Lower leg skin (tissue), 4 donors: ENCODE measurements at regions of chr6 and their contacts with region 1.

Region 1: DNA sequence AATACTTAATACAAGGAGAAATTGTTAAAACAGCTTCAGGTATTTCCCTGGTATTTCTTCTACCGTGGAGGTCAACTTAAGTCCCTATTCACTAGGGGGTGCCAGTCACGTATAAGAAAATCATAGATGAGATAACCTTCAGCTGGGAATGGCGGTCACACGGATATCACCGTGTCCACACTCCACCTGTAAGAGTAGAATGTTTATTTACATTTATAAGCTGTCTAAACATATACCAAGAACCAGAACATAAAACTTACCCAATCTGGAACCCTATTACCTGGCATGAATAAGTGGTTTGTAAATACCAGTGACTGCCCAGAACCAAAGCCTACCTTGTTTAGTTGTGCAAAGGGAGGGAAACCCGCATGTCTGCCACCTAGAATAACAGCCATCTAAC is 1.9 kb upstream of the ELOVL4 start:
- DNase-seq: no peak
- H3K4me3 ChIP-seq: no peak overlapping the region
- CTCF ChIP-seq: peak in 1 of 3 donors; percentile 41
- POLR2A ChIP-seq: no peak

Region 2: DNA sequence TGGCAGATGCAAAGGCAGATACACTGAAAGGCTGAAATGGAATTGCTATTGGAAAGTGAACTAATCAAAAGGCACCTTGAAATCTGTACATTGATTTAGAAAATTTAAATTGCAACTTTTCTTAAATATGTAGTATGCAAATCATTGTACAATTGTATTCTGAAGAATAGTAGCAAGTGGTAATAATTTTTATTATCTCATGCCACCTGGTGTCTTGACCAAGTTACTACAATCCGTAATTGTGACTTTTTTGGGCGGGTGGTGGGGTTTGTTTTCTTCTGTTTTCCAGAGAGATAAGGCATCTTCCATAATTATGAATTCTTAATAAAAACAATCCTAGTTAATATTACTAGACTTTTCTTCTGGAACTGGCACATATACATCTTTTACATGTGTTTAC is 144.8 kb after region 1 on chr6:
- intact Hi-C with region 1: loop called (anchors 10 kb)
- DNase-seq: no peak
- H3K4me3 ChIP-seq: no peak overlapping the region
- CTCF ChIP-seq: no peak
- POLR2A ChIP-seq: no peak

Region 3: DNA sequence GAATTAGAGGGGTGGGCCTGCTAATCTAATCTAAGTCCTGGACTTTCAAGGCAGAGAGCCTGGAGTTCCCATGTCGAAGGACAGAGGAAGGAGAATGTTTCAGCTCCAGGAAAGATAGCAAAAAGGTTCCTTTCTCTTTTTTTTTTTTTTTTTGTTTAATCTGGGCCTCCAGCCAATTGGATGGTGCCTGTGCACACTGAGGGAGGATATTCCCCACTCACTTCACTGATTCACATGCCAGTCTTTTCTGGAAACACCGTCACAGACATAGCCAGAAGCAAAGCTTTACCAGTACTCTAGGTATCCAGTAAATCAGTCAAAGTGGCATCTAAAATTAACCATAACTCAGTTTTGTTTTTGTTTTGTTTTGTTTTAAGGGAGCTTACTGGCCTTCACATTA is 1082.2 kb after region 1 on chr6:
- intact Hi-C with region 1: no loop called
- DNase-seq: no peak
- H3K4me3 ChIP-seq: no peak overlapping the region
- CTCF ChIP-seq: no peak
- POLR2A ChIP-seq: no peak

Region 4: DNA sequence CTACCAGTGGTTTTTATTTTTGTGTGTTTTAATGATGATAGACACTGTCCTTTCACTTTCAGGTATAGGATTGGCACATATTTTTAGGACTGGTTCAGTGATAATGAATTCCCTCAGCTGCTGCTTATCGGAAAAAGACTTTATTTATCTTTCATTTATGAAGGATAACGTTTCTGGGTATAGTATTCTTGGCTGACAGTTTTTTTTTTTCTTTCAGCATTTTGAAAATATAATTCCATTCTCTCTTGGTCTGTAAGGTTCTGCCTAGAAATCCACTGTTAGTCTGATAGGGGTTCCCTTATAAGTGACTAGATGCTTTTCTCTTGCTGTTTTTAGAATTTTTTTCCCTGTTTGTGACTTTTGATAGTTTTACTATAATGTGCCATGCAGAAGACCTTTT is 1490.2 kb after region 1 on chr6:
- intact Hi-C with region 1: no loop called
- DNase-seq: no peak
- H3K4me3 ChIP-seq: no peak overlapping the region
- CTCF ChIP-seq: no peak
- POLR2A ChIP-seq: no peak